Naive thymus-derived CD4-positive, alpha-beta T cell (primary cell): ENCODE measurements at regions of chr2 and their contacts with region 1.

Region 1: DNA sequence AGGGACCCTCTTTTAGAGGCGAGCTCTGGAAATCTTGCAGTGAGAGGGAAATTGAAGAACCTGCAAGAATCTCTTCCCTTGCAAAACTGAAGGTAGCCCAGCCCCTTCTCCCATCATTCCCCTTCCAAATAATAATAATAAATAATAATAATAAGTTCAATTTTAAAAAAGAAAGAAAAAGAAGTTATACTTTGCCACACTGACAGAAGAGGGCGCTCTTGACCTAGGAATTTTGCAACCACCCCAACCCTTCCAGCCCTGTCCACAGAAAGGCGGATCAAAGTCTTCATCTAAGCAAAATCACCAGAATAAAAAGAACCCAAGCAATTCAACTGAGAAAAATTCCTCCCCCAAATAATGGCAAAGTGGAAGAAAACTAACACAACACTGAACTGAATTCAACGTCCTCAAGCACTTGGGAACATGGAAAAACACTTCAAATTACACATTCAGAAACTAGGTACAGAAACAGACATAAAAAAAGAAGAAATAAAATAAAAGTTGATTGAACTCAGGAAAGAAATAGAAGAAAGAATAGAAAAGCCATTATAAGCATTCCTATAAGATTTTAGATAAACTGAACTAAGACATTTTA is 98.9 kb upstream of the GLS start:
- DNase-seq: peak in 8 of 9 donors; percentile 27 to 60 (median 46)
- ATAC-seq: peak; percentile 77
- H3K4me3 ChIP-seq: no peak overlapping the region
- H3K4me3 Mint-ChIP-seq: no peak overlapping the region
- H3K27ac ChIP-seq: no peak overlapping the region
- H3K27ac Mint-ChIP-seq: no peak overlapping the region
- H3K4me1 ChIP-seq: no peaks in the 10 kb centered on the region
- H3K4me1 Mint-ChIP-seq: peaks cover 0 to 11% (median 1%) of the 10 kb centered on the region in 7 donors
- H3K27me3 ChIP-seq: no peaks in the 10 kb centered on the region
- H3K27me3 Mint-ChIP-seq: peaks cover 0 to 8% (median 0%) of the 10 kb centered on the region in 5 donors

Region 2: GRCh38 chr2:189798312-189799029 is 983.2 kb before region 1 on chr2:
- CTCF ChIA-PET with region 1: no interaction called
- POLR2A ChIA-PET with region 1: no interaction called
- intact Hi-C with region 1: no loop called
- DNase-seq: no peak
- ATAC-seq: peak; percentile 62
- H3K4me3 ChIP-seq: no peak overlapping the region
- H3K4me3 Mint-ChIP-seq: no peak overlapping the region
- H3K27ac ChIP-seq: no peak overlapping the region
- H3K27ac Mint-ChIP-seq: no peak overlapping the region
- H3K4me1 ChIP-seq: no peaks in the 10 kb centered on the region
- H3K4me1 Mint-ChIP-seq: peaks cover 0 to 8% (median 0%) of the 10 kb centered on the region in 7 donors
- H3K27me3 ChIP-seq: no peaks in the 10 kb centered on the region
- H3K27me3 Mint-ChIP-seq: no peaks in the 10 kb centered on the region

Region 3: DNA sequence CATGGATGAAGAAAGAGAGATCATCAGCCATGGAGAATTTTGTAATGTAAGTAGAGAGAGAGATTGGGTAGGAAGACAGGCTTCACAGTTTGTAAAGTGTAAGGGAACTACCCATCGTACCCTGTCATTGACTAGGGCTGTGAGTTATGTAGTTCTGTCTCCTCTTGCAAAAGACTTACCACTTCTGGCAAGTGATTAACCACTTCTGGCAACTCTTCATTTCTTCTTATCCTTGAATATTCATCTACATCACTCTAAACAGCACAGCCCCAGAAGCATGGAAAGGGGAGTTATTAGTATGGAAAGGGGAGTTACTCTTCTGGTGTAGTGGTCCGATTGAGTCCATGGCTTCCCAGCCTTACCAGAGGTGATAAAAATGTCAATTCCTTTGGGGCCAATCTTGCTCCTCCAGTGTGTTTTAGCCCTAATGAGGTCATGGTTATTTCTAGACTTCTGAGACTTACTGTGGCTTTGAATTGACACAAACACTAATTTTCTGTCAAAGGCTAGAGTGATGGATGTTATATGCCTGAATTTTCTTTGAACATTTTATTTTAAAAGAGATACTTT is 180.3 kb after region 1 on chr2:
- CTCF ChIA-PET with region 1: no interaction called
- POLR2A ChIA-PET with region 1: no interaction called
- intact Hi-C with region 1: loop called in 1 of 2 experiments (anchors 2 kb)
- DNase-seq: no peak
- ATAC-seq: no peak
- H3K4me3 ChIP-seq: no peak overlapping the region
- H3K4me3 Mint-ChIP-seq: no peak overlapping the region
- H3K27ac ChIP-seq: no peak overlapping the region
- H3K27ac Mint-ChIP-seq: peak overlapping the region; percentile 28 to 85 (median 61)
- H3K4me1 ChIP-seq: no peaks in the 10 kb centered on the region
- H3K4me1 Mint-ChIP-seq: peaks cover 13 to 69% (median 42%) of the 10 kb centered on the region in 7 donors
- H3K27me3 ChIP-seq: no peaks in the 10 kb centered on the region
- H3K27me3 Mint-ChIP-seq: no peaks in the 10 kb centered on the region

Region 4: DNA sequence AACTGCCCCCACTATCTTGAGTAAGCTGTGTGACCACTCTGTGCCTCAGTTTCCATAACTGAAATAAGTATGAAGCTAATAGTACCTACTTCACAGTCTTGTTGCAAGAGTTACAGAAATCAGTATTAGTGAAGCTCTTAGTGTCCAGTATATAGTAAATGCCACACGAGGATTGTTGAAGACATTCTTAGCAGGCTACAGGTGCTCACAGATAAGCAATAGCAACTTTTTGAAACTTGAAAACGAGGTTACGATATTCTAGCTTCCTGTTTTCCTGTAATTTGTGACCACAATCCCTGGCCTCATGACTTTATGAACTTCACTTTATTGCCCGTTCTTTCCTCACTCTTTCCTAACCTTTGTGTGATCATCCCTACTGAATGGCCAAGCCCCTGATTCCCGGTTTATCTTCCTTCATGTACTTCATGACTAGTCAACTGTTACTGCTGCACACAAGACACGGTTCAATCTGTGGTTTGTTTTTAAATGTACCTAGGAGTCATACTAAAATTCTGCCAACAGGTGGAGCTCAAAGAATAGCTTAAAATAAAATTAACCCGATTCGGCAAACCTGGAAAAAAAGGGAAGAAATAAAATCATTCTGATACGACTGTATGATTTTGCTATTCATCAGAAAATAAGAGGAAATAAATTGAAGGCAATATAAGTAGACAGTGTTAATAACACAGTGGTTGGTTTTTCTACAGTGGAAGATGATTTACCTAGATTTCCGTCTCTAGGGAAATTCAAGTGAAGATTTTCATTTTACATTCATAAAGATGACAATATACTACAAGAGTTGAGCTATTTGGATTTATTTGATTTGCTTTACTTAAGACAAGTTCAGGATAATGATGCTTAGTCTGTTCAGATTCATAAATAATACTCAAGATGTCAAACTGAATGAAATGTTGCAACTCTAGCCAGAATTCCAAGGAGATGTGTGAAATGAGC is 270.4 kb after region 1 on chr2:
- CTCF ChIA-PET with region 1: no interaction called
- POLR2A ChIA-PET with region 1: no interaction called
- intact Hi-C with region 1: no loop called
- DNase-seq: peak in 7 of 9 donors; percentile 28 to 66 (median 62)
- ATAC-seq: peak; percentile 84
- H3K4me3 ChIP-seq: no peak overlapping the region
- H3K4me3 Mint-ChIP-seq: no peak overlapping the region
- H3K27ac ChIP-seq: peak overlapping the region; percentile 29
- H3K27ac Mint-ChIP-seq: peak overlapping the region in 1 of 9 donors; percentile 80
- H3K4me1 ChIP-seq: peaks cover 26 to 30% of the 10 kb centered on the region in 2 donors
- H3K4me1 Mint-ChIP-seq: peaks cover 8 to 29% (median 22%) of the 10 kb centered on the region in 7 donors
- H3K27me3 ChIP-seq: no peaks in the 10 kb centered on the region
- H3K27me3 Mint-ChIP-seq: no peaks in the 10 kb centered on the region

Region 5: DNA sequence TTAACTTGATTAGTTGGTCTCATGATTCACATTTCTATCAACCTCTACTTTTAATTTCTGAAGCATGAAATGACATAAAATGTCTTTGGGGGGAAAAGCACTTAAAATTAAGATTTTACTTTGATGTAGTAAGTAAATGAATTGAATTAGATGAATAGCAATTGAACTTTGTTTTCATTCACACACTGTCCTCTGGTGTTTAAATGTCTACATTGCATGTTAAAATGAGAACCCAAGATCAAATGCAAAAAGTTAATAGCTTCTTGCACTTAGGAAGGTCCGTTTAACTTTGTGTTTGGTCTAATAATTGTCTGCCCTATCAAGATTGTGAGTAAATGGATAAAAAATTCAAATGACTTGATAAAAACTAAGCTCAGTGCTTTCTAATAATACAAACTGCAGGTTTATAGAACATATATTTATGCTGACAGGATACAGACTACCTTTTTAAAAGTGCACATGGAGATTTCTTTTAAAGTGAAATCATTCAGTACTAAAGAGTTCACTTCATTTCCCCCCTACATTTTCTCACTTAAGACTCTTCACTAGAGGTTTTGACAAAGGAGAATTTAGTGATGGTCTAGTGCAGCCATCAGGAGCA is 740.0 kb after region 1 on chr2:
- CTCF ChIA-PET with region 1: no interaction called
- POLR2A ChIA-PET with region 1: no interaction called
- intact Hi-C with region 1: loop called (anchors 1 to 5 kb)
- DNase-seq: peak in 5 of 9 donors; percentile 16 to 51 (median 33)
- ATAC-seq: no peak
- H3K4me3 ChIP-seq: no peak overlapping the region
- H3K4me3 Mint-ChIP-seq: no peak overlapping the region
- H3K27ac ChIP-seq: no peak overlapping the region
- H3K27ac Mint-ChIP-seq: no peak overlapping the region
- H3K4me1 ChIP-seq: no peaks in the 10 kb centered on the region
- H3K4me1 Mint-ChIP-seq: no peaks in the 10 kb centered on the region
- H3K27me3 ChIP-seq: no peaks in the 10 kb centered on the region
- H3K27me3 Mint-ChIP-seq: peaks cover 0 to 28% (median 7%) of the 10 kb centered on the region in 5 donors